CD14-positive monocyte (primary cell): ENCODE measurements at regions of chr20 and their contacts with region 1.

Region 1: GRCh38 chr20:48904365-48905296 is 16.9 kb upstream of the ARFGEF2 start:
- DNase-seq: peak; percentile 54 to 73 (median 63)
- H3K4me3 ChIP-seq: no peak overlapping the region
- H3K4me3 Mint-ChIP-seq: no peak overlapping the region
- H3K27ac ChIP-seq: no peak overlapping the region
- H3K27ac Mint-ChIP-seq: peak overlapping the region in 3 of 7 donors; percentile 46 to 74 (median 70)
- H3K4me1 ChIP-seq: peaks cover 47 to 61% of the 10 kb centered on the region in 2 donors
- H3K4me1 Mint-ChIP-seq: peaks cover 66% of the 10 kb centered on the region
- H3K27me3 ChIP-seq: no peaks in the 10 kb centered on the region
- H3K27me3 Mint-ChIP-seq: peaks cover 0 to 4% (median 4%) of the 10 kb centered on the region in 3 donors
- CTCF ChIP-seq: peak; percentile 83

Region 2: GRCh38 chr20:48609491-48609978 is 295.1 kb before region 1 on chr20:
- intact Hi-C with region 1: no loop called
- DNase-seq: no peak
- H3K4me3 ChIP-seq: no peak overlapping the region
- H3K4me3 Mint-ChIP-seq: no peak overlapping the region
- H3K27ac ChIP-seq: no peak overlapping the region
- H3K27ac Mint-ChIP-seq: no peak overlapping the region
- H3K4me1 ChIP-seq: peaks cover under 1% of the 10 kb centered on the region in 2 donors
- H3K4me1 Mint-ChIP-seq: peaks cover 6% of the 10 kb centered on the region
- H3K27me3 ChIP-seq: no peaks in the 10 kb centered on the region
- H3K27me3 Mint-ChIP-seq: peaks cover 2 to 13% (median 11%) of the 10 kb centered on the region in 3 donors
- CTCF ChIP-seq: no peak

Region 3: DNA sequence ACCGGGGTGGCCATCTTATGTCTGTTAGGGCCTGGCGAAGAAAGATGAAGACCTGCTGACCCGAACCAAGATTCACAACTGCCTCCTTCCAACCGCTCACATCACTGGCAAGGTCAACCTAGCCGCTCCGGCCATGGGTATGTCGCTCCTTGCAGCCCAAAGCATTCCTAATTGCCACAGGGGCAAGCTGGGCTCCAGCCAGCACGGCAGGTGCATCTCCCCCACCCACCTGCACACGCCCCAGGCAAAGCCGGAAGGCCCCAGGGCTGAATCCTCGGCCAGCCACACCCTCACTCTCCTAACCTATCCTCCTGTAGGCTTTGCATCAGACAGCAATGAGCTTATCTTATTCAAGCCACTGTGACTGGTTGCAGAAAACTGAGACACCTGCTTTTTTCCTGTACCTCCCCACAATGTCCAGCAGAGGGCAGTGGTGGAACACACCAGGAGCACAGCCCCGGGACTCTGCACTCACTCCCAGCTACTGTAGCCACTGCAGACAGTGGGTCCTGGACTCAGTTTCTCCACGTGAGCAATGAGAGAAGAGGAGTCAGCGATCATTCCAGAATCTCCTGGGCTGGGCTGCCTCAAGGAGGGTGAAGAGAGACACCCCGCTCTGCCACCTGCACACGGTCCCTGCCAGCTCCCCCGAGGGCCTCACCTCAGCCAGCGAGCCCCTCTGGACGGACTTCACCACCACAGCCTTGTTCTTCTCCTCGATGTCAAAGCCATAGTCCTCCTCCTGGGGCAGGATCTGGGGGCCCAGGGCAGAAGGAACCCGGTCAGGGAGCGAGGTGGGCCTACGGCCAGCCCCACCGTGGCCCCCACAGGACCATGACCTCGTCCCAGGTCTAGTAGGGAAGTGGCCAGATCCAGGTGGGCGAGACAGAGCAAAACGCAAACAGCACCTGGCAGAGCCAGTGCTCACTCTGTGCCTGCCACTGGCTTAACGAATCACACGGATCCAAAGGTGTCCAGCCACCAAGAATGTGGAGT is 246.9 kb before region 1 on chr20:
- intact Hi-C with region 1: loop called (anchors 2 kb)
- DNase-seq: peak; percentile 57 to 69 (median 66)
- H3K4me3 ChIP-seq: no peak overlapping the region
- H3K4me3 Mint-ChIP-seq: no peak overlapping the region
- H3K27ac ChIP-seq: peak overlapping the region in 1 of 2 donors; percentile 17
- H3K27ac Mint-ChIP-seq: peak overlapping the region in 5 of 7 donors; percentile 30 to 78 (median 57)
- H3K4me1 ChIP-seq: no peaks in the 10 kb centered on the region
- H3K4me1 Mint-ChIP-seq: peaks cover 8% of the 10 kb centered on the region
- H3K27me3 ChIP-seq: no peaks in the 10 kb centered on the region
- H3K27me3 Mint-ChIP-seq: peaks cover 0 to 2% (median 0%) of the 10 kb centered on the region in 3 donors
- CTCF ChIP-seq: peak; percentile 90

Region 4: DNA sequence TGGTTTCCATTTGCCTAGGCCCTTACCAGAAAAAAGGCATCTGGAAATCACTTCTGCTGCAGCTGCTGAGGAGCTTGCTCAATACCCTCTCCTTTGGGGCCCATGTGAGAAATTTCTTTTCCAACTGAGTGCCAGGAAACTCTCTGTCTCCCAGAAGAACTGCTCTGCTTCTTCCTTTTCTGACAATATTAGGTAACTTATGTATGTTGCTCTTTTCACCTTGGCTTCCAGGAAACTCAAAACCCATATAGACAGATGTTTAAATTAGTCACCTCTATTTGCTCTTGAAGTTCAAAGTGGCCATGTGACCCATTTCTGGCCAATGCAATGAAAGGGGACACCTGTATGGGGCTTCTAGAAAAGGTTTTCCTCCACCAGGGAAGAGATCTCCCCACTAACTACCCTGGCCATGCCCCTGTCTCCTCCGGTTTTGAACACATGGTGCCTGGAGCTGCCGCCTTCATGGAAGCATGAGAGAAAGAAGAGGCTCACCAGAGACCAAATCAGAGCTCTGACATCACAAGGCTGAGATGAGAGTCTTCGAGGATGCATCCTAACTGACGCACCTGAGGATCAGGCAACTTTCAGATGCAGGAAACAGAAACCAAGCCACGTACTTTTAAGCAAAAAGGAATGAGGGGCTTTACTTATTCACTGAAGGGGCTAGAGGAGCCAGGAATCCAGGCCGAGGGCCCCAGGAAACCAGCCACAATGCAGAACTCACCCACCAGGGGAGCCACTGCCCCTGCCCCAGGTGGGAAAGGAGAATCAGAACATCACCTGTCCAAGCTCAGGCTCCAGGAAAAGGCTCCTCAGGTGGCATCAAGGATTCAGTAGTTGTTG is 198.2 kb before region 1 on chr20:
- intact Hi-C with region 1: loop called (anchors 5 to 10 kb)
- DNase-seq: no peak
- H3K4me3 ChIP-seq: no peak overlapping the region
- H3K4me3 Mint-ChIP-seq: no peak overlapping the region
- H3K27ac ChIP-seq: peak overlapping the region in 1 of 2 donors; percentile 64
- H3K27ac Mint-ChIP-seq: peak overlapping the region in 5 of 7 donors; percentile 31 to 83 (median 68)
- H3K4me1 ChIP-seq: peaks cover 24 to 40% of the 10 kb centered on the region in 2 donors
- H3K4me1 Mint-ChIP-seq: peaks cover 54% of the 10 kb centered on the region
- H3K27me3 ChIP-seq: no peaks in the 10 kb centered on the region
- H3K27me3 Mint-ChIP-seq: peaks cover 0 to 2% (median 2%) of the 10 kb centered on the region in 3 donors
- CTCF ChIP-seq: no peak

Region 5: GRCh38 chr20:48787861-48788375 is 116.7 kb before region 1 on chr20:
- intact Hi-C with region 1: loop called in 1 of 2 experiments (anchors 5 kb)
- DNase-seq: peak; percentile 71 to 90 (median 86)
- H3K4me3 ChIP-seq: peak overlapping the region in 1 of 3 experiments; percentile 64
- H3K4me3 Mint-ChIP-seq: peak overlapping the region; percentile 45 to 81
- H3K27ac ChIP-seq: peak overlapping the region; percentile 78 to 96
- H3K27ac Mint-ChIP-seq: peak overlapping the region; percentile 95 to 99 (median 98)
- H3K4me1 ChIP-seq: peaks cover 83 to 91% of the 10 kb centered on the region in 2 donors
- H3K4me1 Mint-ChIP-seq: peaks cover 83% of the 10 kb centered on the region
- H3K27me3 ChIP-seq: no peaks in the 10 kb centered on the region
- H3K27me3 Mint-ChIP-seq: peaks cover 0 to 5% (median 2%) of the 10 kb centered on the region in 3 donors
- CTCF ChIP-seq: no peak

Region 6: GRCh38 chr20:48921151-48921898 is 16.7 kb after region 1 on chr20 and contains the start of gene ARFGEF2:
- intact Hi-C with region 1: loop called in 1 of 2 experiments (anchors 2 kb)
- DNase-seq: peak; percentile 92 to 95 (median 93)
- H3K4me3 ChIP-seq: peak within 1 kb of the TSS; percentile 66 to 80 (median 77)
- H3K4me3 Mint-ChIP-seq: peak within 1 kb of the TSS; percentile 94 to 97
- H3K27ac ChIP-seq: peak within 1 kb of the TSS; percentile 88 to 98
- H3K27ac Mint-ChIP-seq: peak within 1 kb of the TSS; percentile 99 to 100 (median 100)
- H3K4me1 ChIP-seq: peaks cover 43 to 52% of the 10 kb centered on the region in 2 donors
- H3K4me1 Mint-ChIP-seq: peaks cover 57% of the 10 kb centered on the region
- H3K27me3 ChIP-seq: no peaks in the 10 kb centered on the region
- H3K27me3 Mint-ChIP-seq: peaks cover 0 to 3% (median 1%) of the 10 kb centered on the region in 3 donors
- CTCF ChIP-seq: no peak
- polyA plus RNA-seq, gene ARFGEF2: 4.6 to 10.9 (median 5.5) TPM